Activated CD4-positive, alpha-beta memory T cell treated with anti-CD3 and anti-CD28 coated beads for 36 hours (primary cell): ENCODE measurements at regions of chr1 and their contacts with region 1.

Region 1: GRCh38 chr1:15847100-15847892 is at the start of gene SPEN:
- DNase-seq: peak; percentile 98
- H3K4me3 Mint-ChIP-seq: peak within 1 kb of the TSS; percentile 98
- H3K27ac Mint-ChIP-seq: peak within 1 kb of the TSS; percentile 93
- H3K4me1 Mint-ChIP-seq: peaks cover 45% of the 10 kb centered on the region
- H3K27me3 Mint-ChIP-seq: no peaks in the 10 kb centered on the region
- total RNA-seq, gene SPEN: 37.0 to 41.9 TPM

Region 2: GRCh38 chr1:15835741-15836510 is 11.4 kb before region 1 on chr1:
- CTCF ChIA-PET with region 1: interaction called, 17 read pairs
- POLR2A ChIA-PET with region 1: interaction called, 97 read pairs
- intact Hi-C with region 1: loop called (anchors 1 kb)
- DNase-seq: peak; percentile 100
- H3K4me3 Mint-ChIP-seq: peak overlapping the region; percentile 81
- H3K27ac Mint-ChIP-seq: peak overlapping the region; percentile 96
- H3K4me1 Mint-ChIP-seq: peaks cover 18% of the 10 kb centered on the region
- H3K27me3 Mint-ChIP-seq: no peaks in the 10 kb centered on the region

Region 3: GRCh38 chr1:15863156-15863901 is 16.0 kb after region 1 on chr1:
- CTCF ChIA-PET with region 1: no interaction called
- POLR2A ChIA-PET with region 1: no interaction called
- intact Hi-C with region 1: no loop called
- DNase-seq: no peak
- H3K4me3 Mint-ChIP-seq: no peak overlapping the region
- H3K27ac Mint-ChIP-seq: no peak overlapping the region
- H3K4me1 Mint-ChIP-seq: peaks cover 39% of the 10 kb centered on the region
- H3K27me3 Mint-ChIP-seq: no peaks in the 10 kb centered on the region

Region 4: DNA sequence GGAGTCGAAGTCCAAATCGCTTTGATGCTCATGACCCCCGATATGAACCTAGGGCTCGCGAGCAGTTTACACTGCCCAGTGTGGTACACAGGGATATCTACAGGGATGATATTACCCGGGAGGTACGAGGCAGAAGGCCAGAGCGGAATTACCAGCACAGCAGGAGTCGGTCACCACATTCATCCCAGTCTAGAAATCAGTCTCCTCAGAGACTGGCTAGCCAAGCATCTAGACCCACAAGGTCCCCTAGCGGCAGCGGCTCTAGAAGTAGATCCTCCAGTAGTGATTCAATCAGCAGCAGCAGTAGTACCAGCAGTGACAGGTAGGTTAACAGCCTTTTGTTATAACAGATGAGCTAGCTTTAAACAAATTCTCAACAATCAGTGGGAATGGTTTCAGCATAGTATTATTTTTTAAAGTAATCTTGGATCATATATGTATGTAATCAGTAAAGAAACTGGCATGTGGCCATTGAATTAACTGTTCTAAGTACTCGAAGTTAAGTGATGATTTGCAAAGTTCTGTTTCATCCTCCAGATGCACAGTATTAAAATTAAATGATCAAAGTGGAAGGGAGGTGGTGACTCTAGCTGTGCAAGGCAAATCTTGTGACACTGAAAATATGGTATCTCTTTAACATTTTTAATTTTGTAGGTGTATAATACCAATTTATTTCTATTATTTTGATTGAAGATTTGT is 29.2 kb after region 1 on chr1:
- CTCF ChIA-PET with region 1: no interaction called
- POLR2A ChIA-PET with region 1: no interaction called
- intact Hi-C with region 1: no loop called
- DNase-seq: no peak
- H3K4me3 Mint-ChIP-seq: no peak overlapping the region
- H3K27ac Mint-ChIP-seq: no peak overlapping the region
- H3K4me1 Mint-ChIP-seq: peaks cover 45% of the 10 kb centered on the region
- H3K27me3 Mint-ChIP-seq: no peaks in the 10 kb centered on the region

Region 5: GRCh38 chr1:15918962-15919715 is 71.8 kb after region 1 on chr1:
- CTCF ChIA-PET with region 1: interaction called, 3 read pairs
- POLR2A ChIA-PET with region 1: interaction called, 3 read pairs
- intact Hi-C with region 1: loop called (anchors 1 kb)
- DNase-seq: peak; percentile 89
- H3K4me3 Mint-ChIP-seq: no peak overlapping the region
- H3K27ac Mint-ChIP-seq: no peak overlapping the region
- H3K4me1 Mint-ChIP-seq: peaks cover 41% of the 10 kb centered on the region
- H3K27me3 Mint-ChIP-seq: no peaks in the 10 kb centered on the region

Region 6: DNA sequence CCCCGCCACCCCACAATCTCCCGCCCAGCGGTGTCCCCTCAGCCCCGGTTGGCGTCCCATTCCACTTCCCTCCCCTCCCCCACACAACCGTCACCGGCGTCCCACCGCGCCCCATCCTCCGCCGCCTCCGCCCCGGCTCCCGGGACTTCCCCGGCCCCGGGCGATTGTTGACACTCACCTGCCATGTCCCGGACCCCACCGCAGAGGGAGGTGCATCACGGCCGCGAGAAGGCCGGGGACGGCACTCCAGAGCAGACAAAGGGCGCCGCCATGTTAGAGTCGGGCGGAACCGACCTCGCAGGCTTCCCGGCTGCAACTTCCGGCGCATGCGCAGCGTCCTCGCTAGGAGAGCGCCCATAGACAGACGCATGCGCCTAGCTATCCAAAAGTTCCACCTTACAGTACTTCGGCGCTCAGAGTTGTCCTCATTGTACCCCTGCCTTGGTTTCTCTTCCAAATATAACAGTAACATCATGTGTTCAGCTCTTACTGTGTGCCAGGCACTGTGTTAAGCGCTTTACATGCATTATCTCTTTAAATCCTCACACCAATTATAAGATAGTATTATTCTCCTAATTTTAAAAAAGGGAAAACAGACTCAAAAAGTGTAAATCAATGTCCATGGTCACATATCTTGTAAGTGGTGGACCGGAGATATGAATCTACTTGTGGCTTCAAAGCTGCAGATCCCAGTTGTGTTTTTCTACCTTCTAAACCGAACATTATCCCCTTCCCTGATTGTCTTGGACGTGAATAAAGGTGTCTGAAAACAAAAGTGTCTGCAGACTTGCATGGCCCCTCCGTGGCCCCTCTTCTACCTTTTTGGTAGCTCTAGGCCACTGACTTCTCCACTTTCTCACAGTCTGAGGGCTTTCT is 128.7 kb after region 1 on chr1 and contains the start of gene ZBTB17:
- CTCF ChIA-PET with region 1: no interaction called
- POLR2A ChIA-PET with region 1: interaction called, 11 read pairs
- intact Hi-C with region 1: loop called (anchors 1 kb)
- DNase-seq: peak; percentile 97
- H3K4me3 Mint-ChIP-seq: peak within 1 kb of the TSS; percentile 87
- H3K27ac Mint-ChIP-seq: peak within 1 kb of the TSS; percentile 94
- H3K4me1 Mint-ChIP-seq: peaks cover 38% of the 10 kb centered on the region
- H3K27me3 Mint-ChIP-seq: no peaks in the 10 kb centered on the region
- total RNA-seq, gene ZBTB17: 52.7 to 58.8 TPM